ENCODE measurements at regions of chr17 and their contacts with region 1.

Region 1: GRCh38 chr17:19766422-19767270 is 18.5 kb upstream of the ALDH3A1 start:
- DNase-seq: peak; percentile 84 to 91
- ATAC-seq: peak; percentile 91 to 97 (median 94)
- H3K4me3 ChIP-seq: no peak overlapping the region
- H3K27ac ChIP-seq: no peak overlapping the region
- H3K4me1 ChIP-seq: no peaks in the 10 kb centered on the region
- H3K27me3 ChIP-seq: no peaks in the 10 kb centered on the region
- CTCF ChIP-seq: peak; percentile 95

Region 2: DNA sequence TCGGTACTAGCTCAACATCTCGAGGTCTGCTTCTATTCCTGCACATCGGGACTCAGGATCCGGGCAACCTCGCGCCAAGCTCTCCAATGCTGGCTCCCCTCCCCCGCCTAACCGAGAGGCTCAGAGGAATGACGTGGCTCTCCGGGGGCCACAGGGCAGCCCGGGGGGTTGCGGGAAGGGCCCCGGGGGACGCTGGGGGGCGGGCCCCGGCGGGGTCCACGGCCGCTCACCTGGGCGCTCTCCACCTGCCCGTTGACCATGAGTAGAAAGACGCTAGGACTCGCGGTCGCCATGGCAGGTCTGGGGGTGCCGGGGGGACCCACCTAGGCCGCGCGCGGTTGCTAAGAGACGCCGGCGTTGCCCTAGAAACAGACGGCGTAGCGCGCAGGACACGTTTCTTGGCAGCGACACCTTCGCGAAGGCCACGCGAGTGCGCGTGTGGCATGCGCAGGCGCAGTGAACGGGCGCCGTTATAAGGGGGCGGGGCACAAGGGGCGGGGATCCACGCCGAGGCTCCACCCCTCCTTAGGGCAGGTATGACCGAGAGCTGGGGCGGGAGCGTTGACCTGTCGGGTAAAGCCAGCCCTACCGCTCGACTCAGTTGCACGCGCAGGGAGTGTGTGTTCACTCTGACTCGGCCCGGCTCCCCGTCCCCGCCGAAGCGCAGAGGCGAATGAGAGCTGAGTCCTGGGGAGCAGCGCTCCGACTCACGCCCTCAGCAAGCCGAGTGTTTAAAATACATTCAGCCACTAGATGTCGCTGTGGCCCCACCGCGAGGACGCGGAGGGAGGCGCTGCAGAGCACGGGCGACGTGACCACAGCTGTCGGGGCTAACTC is 404.2 kb before region 1 on chr17 and contains the start of gene B9D1:
- intact Hi-C with region 1: loop called (anchors 2 to 10 kb)
- DNase-seq: peak; percentile 91 to 97
- ATAC-seq: peak; percentile 96 to 98 (median 96)
- H3K4me3 ChIP-seq: peak within 1 kb of the TSS; percentile 90
- H3K27ac ChIP-seq: peak within 1 kb of the TSS; percentile 76
- H3K4me1 ChIP-seq: no peaks in the 10 kb centered on the region
- H3K27me3 ChIP-seq: no peaks in the 10 kb centered on the region
- CTCF ChIP-seq: peak; percentile 97
- total RNA-seq, gene B9D1: 4.7 to 8.7 (median 6.4) TPM

Region 3: GRCh38 chr17:19513897-19514488 is 252.7 kb before region 1 on chr17:
- intact Hi-C with region 1: loop called (anchors 1 to 5 kb)
- DNase-seq: peak; percentile 56 to 72
- ATAC-seq: peak; percentile 79 to 92 (median 81)
- H3K4me3 ChIP-seq: peak overlapping the region; percentile 5
- H3K27ac ChIP-seq: peak overlapping the region; percentile 40
- H3K4me1 ChIP-seq: peaks cover 6% of the 10 kb centered on the region
- H3K27me3 ChIP-seq: no peaks in the 10 kb centered on the region
- CTCF ChIP-seq: peak; percentile 93

Region 4: DNA sequence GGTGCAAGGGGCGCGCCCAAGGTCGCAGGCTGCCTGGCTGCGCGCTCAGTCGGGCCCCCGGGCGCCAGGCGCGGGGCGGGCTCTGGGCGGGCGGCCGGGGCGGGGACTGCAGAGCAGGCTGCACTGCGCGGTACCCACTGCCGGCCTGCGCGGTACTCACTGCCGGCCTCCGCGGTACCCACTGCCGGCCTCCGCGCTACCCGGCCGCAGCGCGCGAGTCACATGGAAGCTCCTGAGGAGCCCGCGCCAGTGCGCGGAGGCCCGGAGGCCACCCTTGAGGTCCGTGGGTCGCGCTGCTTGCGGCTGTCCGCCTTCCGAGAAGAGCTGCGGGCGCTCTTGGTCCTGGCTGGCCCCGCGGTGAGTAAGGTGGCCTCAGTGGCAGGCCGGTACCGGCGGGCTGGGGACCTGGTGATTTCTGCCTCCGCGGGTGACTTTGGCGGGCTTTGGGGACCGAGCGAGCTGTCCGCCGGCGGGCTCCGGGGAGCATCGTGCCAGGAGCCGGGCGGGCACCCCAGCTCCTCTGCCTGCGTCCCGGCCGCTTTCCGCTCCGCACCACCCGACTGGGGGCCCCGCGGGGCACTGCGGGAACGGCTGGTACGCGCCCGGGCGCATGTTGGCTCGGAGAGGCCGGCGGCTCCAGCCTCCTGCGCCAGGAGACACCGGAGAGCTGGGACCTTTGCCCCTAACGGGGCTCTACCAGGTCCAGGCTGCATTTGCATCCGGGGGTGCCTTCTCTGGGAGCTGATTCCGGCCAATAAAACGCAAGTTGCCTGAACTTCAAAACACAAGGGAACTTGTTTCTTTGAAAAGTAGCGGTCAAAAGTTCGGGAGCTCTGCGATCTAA is 232.7 kb before region 1 on chr17 and contains the start of gene SLC47A1:
- intact Hi-C with region 1: loop called in 1 of 2 experiments (anchors 5 kb)
- DNase-seq: peak; percentile 58 to 75
- ATAC-seq: peak; percentile 82 to 84 (median 82)
- H3K4me3 ChIP-seq: peak within 1 kb of the TSS; percentile 79
- H3K27ac ChIP-seq: peak within 1 kb of the TSS; percentile 82
- H3K4me1 ChIP-seq: peaks cover 31% of the 10 kb centered on the region
- H3K27me3 ChIP-seq: no peaks in the 10 kb centered on the region
- CTCF ChIP-seq: no peak
- total RNA-seq, gene SLC47A1: 27.7 to 57.3 (median 42.8) TPM

Region 5: DNA sequence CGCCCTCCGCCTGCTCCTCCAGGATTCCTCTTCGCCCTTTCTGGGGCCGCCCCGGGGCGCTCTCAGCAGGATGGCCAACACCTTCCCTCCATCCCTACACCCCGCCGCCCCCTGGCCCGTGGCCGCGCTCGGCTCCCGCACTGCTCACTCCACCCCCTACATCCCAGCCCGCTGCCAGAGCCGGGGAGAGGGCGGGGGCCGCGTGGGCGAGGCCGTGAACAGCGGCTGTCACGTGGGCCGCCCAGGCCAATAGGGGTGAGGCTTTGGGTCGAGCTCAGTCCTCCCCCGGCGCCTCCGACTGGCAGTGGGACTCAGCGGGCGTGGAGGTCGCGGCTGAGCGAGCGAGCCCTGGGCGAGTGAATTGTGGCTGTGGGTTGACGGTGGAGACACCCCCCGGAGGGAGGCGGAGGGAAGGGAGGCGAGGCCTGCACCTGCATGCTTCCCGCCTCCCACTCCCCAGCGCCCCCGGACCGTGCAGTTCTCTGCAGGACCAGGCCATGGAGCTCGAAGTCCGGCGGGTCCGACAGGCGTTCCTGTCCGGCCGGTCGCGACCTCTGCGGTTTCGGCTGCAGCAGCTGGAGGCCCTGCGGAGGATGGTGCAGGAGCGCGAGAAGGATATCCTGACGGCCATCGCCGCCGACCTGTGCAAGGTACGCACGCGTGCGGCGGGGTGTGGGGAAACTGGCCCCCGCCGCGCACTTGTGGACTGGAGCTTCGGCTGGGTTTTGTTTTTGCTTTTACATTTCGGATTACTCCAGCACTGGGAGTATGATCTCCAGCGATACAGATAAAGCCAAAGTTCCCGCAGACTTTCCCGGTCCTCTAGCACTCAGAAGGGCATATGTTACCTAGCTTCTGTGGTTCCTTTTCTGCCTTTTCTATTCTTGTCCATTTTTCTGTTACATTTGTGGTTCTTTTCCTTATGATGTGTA is 117.9 kb before region 1 on chr17 and contains the start of gene ALDH3A2:
- intact Hi-C with region 1: loop called in 1 of 2 experiments (anchors 5 kb)
- DNase-seq: peak; percentile 98
- ATAC-seq: peak; percentile 96 to 98 (median 96)
- H3K4me3 ChIP-seq: peak within 1 kb of the TSS; percentile 84
- H3K27ac ChIP-seq: peak within 1 kb of the TSS; percentile 94
- H3K4me1 ChIP-seq: peaks cover 40% of the 10 kb centered on the region
- H3K27me3 ChIP-seq: no peaks in the 10 kb centered on the region
- CTCF ChIP-seq: peak; percentile 16
- total RNA-seq, gene ALDH3A2: 57.6 to 229 (median 86.2) TPM

Region 6: DNA sequence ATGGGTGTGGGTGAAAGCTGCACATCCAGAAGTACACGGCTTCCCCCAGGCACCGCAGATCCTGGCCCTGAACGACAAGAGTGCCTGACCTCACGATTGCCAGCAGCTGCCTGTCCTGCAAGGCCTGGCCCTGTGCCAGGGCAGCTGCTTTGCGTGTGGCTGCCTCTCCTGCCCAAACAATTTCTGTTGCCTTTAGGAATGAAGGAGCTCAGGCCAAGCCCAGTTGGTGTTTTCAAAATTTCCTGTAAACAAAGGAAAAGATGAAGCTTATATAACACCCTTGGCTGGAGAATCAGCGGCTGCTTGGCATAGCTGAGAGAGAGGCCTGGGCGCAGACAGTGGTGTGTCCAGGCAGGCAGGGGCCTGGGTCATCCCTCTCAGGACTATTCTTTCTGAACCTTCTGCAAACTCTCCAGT is 38.6 kb before region 1 on chr17:
- intact Hi-C with region 1: no loop called
- DNase-seq: peak; percentile 92 to 95
- ATAC-seq: peak; percentile 82 to 90 (median 84)
- H3K4me3 ChIP-seq: no peak overlapping the region
- H3K27ac ChIP-seq: peak overlapping the region; percentile 91
- H3K4me1 ChIP-seq: peaks cover 33% of the 10 kb centered on the region
- H3K27me3 ChIP-seq: no peaks in the 10 kb centered on the region
- CTCF ChIP-seq: no peak

Measured in psoas muscle (tissue), 8 donors.